Panc1 (cell line): ENCODE measurements at regions of chr14 and their contacts with region 1.

Region 1: DNA sequence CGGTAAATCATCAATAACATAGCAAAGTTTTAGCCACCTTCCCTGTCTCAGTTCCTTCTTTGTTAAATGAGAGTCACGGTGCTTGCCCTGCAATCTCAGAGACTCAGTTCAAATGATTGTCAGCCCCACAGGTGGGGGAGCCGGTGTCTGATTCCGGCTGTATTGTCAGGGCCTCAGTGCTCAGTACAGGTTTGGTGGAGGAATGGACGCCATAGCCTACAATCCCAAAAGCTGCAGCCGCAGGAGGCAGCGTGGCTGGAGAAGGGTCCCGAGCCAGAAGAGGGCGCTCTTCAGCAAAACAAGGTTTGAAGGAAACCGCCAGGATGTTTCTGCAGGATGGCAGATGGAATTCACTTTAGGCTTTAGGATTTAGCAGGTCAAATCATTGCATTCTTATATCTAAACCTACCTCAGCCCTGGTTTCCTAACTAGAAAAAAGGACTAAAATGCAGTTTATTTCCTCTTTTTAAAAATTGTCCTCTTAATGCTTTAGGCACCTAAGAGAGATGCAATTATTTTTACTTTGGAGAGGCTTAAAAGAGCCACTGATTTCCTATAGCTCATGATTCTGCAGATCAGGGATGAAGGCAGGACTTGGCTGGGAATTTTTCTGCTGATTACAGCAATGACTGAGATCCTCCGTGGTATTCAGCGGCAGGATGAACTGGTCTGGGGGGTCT is 29.2 kb downstream of the FOS start:
- DNase-seq: no peak
- ATAC-seq: peak; percentile 86
- H3K4me3 ChIP-seq: no peak overlapping the region
- H3K27ac ChIP-seq: no peak overlapping the region
- H3K4me1 ChIP-seq: no peaks in the 10 kb centered on the region
- H3K27me3 ChIP-seq: no peaks in the 10 kb centered on the region
- CTCF ChIP-seq: peak; percentile 80

Region 2: GRCh38 chr14:75132382-75133086 is 175.3 kb before region 1 on chr14:
- CTCF ChIA-PET with region 1: no interaction called
- POLR2A ChIA-PET with region 1: no interaction called
- in situ Hi-C with region 1: no loop called
- intact Hi-C with region 1: loop called (anchors 2 kb)
- DNase-seq: peak; percentile 55
- ATAC-seq: peak; percentile 92
- H3K4me3 ChIP-seq: no peak overlapping the region
- H3K27ac ChIP-seq: no peak overlapping the region
- H3K4me1 ChIP-seq: peaks cover 4% of the 10 kb centered on the region; the same call in 1 of the 2 replicates
- H3K27me3 ChIP-seq: no peaks in the 10 kb centered on the region
- CTCF ChIP-seq: peak; percentile 56; the same call in 1 of the 2 replicates

Region 3: GRCh38 chr14:75427482-75428229 is 119.8 kb after region 1 on chr14 and contains the start of gene JDP2:
- CTCF ChIA-PET with region 1: interaction called, 3 read pairs
- POLR2A ChIA-PET with region 1: no interaction called
- in situ Hi-C with region 1: no loop called
- intact Hi-C with region 1: loop called (anchors 10 kb)
- DNase-seq: no peak
- ATAC-seq: peak; percentile 85
- H3K4me3 ChIP-seq: peak within 1 kb of the TSS; percentile 56 to 57
- H3K27ac ChIP-seq: peak within 1 kb of the TSS; percentile 63
- H3K4me1 ChIP-seq: peaks cover 21% of the 10 kb centered on the region
- H3K27me3 ChIP-seq: no peaks in the 10 kb centered on the region
- CTCF ChIP-seq: no peak
- total RNA-seq, gene JDP2: 17.5 TPM

Region 4: DNA sequence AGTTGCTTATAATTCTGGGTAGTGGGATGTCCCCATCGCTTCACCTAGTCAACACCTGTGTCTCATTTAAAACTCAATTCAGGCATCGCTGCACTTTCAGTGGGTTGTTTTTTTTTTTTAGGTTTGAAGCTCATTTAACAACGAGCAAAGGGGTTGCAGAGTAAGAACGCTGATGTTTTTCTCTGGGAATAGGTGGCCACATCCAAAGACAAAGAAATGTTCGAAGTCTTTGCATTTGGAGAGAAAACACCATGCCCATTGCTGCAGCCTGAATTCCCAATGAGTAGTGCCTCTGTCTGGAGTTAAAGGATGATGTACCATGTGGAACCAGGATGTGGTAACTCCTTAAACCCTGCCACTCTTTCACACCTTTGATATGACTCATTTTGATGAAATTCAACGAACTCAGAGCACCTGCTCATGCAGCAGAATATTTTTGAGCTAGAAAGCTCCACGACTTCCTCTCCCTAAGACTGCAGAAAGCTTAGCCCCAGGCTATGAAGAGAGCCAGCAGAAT is 179.4 kb after region 1 on chr14:
- CTCF ChIA-PET with region 1: interaction called, 4 read pairs
- POLR2A ChIA-PET with region 1: no interaction called
- in situ Hi-C with region 1: no loop called
- intact Hi-C with region 1: loop called (anchors 1 kb)
- DNase-seq: no peak
- ATAC-seq: no peak
- H3K4me3 ChIP-seq: no peak overlapping the region
- H3K27ac ChIP-seq: no peak overlapping the region
- H3K4me1 ChIP-seq: no peaks in the 10 kb centered on the region
- H3K27me3 ChIP-seq: no peaks in the 10 kb centered on the region
- CTCF ChIP-seq: no peak

Region 5: DNA sequence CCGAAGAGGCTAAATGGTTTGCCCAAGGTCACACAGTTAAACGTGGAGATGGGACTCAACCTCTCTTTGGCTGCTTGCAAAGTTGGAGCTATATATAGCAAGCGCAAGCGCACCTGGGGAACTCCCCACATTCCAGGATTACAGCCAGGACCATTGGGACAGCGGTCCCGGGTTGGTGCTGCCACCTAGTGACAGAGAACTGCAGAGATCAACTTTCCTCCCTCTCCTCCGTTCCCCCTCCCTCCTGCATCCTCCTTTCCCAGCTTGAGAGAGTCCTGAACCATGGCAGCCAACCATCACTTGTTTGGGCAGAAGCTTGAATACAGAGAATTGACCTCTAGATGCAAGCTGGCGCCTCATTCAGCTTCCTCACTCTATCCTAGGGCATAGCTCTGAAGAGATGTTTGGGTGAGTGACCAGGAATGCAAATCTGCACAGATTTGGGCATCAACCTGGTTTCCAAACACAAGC is 253.2 kb after region 1 on chr14:
- CTCF ChIA-PET with region 1: interaction called, 5 read pairs
- POLR2A ChIA-PET with region 1: no interaction called
- in situ Hi-C with region 1: no loop called
- intact Hi-C with region 1: loop called (anchors 2 kb)
- DNase-seq: peak; percentile 78
- ATAC-seq: peak; percentile 97
- H3K4me3 ChIP-seq: no peak overlapping the region
- H3K27ac ChIP-seq: no peak overlapping the region
- H3K4me1 ChIP-seq: peaks cover 4% of the 10 kb centered on the region; the same call in 1 of the 2 replicates
- H3K27me3 ChIP-seq: no peaks in the 10 kb centered on the region
- CTCF ChIP-seq: peak; percentile 86

Region 6: DNA sequence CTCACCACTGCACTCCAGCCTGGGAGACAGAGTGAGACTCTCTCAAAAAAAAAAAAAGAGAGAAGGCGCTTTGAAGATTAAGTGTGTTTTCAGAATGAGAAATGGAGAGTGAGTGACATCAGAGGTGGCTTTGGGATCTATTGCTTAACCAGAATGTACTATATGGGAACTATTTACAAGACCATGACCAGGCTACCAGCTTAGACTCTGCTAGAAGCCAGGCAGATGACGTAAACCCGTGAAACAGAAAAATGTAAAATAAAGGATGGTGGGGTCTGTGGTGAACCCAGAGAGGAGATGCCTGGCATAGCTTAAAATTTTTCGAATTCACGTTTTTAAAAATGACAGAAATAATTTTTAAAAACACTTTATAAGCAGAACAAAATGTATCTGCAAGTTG is 759.7 kb after region 1 on chr14:
- CTCF ChIA-PET with region 1: no interaction called
- POLR2A ChIA-PET with region 1: no interaction called
- in situ Hi-C with region 1: no loop called
- intact Hi-C with region 1: no loop called
- DNase-seq: no peak
- ATAC-seq: no peak
- H3K4me3 ChIP-seq: no peak overlapping the region
- H3K27ac ChIP-seq: no peak overlapping the region
- H3K4me1 ChIP-seq: no peaks in the 10 kb centered on the region
- H3K27me3 ChIP-seq: no peaks in the 10 kb centered on the region
- CTCF ChIP-seq: no peak